ENCODE measurements at regions of chr3 and their contacts with region 1.

Region 1: GRCh38 chr3:66971891-66972551 is 26.1 kb upstream of the KBTBD8 start:
- DNase-seq: peak; percentile 78 to 80
- ATAC-seq: peak; percentile 91
- H3K4me3 ChIP-seq: peak overlapping the region; percentile 33 to 44
- H3K27ac ChIP-seq: no peak overlapping the region
- H3K4me1 ChIP-seq: no peaks in the 10 kb centered on the region
- H3K27me3 ChIP-seq: no peaks in the 10 kb centered on the region

Region 2: DNA sequence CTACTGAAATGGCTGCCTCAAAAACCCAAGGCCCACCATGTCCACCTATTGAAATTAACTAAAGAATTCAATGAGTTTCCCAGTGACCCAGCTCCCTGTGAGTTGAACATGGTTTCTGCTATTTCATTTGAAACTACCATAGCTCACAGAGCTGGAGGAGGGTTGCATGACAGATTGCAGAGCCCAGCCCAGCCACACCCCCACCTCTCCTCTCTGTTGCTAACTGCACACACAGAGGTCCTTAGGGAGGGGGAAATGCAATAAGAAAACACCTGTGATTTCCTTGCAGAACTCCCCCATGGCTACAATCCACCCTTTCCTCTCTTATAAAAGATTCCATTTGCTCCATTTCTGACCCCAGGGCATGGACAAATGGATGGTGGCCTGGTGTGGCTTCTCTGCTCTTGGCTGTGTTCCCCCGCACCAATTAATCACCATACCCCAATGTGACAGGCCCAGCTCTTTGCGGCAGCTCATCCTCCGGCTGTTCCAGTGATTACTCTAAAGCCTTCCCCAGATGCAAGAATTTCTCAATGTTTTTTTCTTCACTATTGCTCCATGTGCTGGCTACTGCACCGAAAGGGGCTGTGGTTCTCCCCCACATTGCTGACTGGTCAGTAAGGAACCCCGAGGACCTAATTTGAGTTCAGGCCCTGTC is 182.3 kb before region 1 on chr3:
- intact Hi-C with region 1: no loop called
- DNase-seq: no peak
- ATAC-seq: no peak
- H3K4me3 ChIP-seq: no peak overlapping the region
- H3K27ac ChIP-seq: no peak overlapping the region
- H3K4me1 ChIP-seq: no peaks in the 10 kb centered on the region
- H3K27me3 ChIP-seq: no peaks in the 10 kb centered on the region

Region 3: GRCh38 chr3:66898155-66898554 is 73.9 kb before region 1 on chr3:
- intact Hi-C with region 1: no loop called
- DNase-seq: no peak
- ATAC-seq: no peak
- H3K4me3 ChIP-seq: no peak overlapping the region
- H3K27ac ChIP-seq: no peak overlapping the region
- H3K4me1 ChIP-seq: no peaks in the 10 kb centered on the region
- H3K27me3 ChIP-seq: peaks cover 0 to 2% of the 10 kb centered on the region in 2 donors

Region 4: GRCh38 chr3:66931291-66931690 is 40.7 kb before region 1 on chr3:
- intact Hi-C with region 1: no loop called
- DNase-seq: no peak
- ATAC-seq: no peak
- H3K4me3 ChIP-seq: no peak overlapping the region
- H3K27ac ChIP-seq: no peak overlapping the region
- H3K4me1 ChIP-seq: no peaks in the 10 kb centered on the region
- H3K27me3 ChIP-seq: no peaks in the 10 kb centered on the region

Region 5: GRCh38 chr3:68893600-68894239 is 1921.7 kb after region 1 on chr3:
- intact Hi-C with region 1: loop called (anchors 5 to 10 kb)
- DNase-seq: no peak
- ATAC-seq: no peak
- H3K4me3 ChIP-seq: no peak overlapping the region
- H3K27ac ChIP-seq: no peak overlapping the region
- H3K4me1 ChIP-seq: no peaks in the 10 kb centered on the region
- H3K27me3 ChIP-seq: no peaks in the 10 kb centered on the region